HepG2 (cell line): ENCODE measurements at regions of chr15 and their contacts with region 1.

Region 1: GRCh38 chr15:88610701-88611231 is 10.4 kb upstream of the AEN start:
- DNase-seq: no peak
- ATAC-seq: no peak; the same call in 2 of the 3 replicates
- H3K4me3 ChIP-seq: no peak overlapping the region
- H3K27ac ChIP-seq: no peak overlapping the region
- H3K4me1 ChIP-seq: peaks cover 17% of the 10 kb centered on the region
- H3K27me3 ChIP-seq: peaks cover 2 to 16% of the 10 kb centered on the region in 2 experiments; a peak in 3 of 5 replicates
- CTCF ChIP-seq: no peak
- EP300 ChIP-seq: no peak
- POLR2A ChIP-seq: no peak
- RAD21 ChIP-seq: no peak

Region 2: DNA sequence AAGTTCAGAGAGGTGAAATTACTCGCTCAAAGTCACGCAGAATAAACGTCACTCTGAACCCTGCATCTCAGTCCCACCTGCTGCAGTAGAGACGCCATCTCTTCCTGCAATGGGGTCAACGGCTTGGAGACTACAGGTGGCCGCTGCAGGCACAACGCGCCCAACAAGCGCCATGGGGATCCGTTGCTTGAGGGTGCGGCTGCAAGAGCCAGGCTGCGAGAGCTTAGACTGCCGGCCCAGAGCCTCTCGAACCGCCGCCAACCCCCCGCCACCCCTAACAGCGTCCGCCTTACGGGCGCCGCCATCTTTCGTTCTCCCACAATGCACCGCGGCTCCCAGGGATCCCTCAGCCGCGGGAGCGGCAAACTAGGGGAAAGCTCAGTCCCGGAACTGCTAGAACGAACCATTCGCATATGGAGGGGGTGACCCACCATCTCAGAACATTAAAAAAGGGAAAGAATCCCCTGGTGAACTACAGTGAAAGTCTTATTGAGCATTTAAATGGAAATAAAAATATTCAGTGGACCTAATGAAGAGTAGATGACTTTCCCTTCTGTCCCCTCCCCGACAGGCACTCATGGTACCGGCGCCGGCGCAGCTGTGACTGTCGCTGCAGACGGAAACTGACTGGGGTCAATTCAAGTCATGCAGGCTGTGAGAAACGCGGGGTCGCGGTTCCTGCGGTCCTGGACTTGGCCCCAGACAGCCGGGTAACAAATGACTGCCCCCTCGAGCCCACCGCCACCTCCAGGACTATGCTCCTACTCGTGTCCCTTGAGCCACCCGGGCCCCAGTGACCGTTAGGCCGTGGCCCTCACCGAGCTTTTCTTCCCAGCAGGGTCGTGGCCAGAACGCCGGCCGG is 143.5 kb before region 1 on chr15 and contains the starts of genes MRPL46 and MRPS11:
- CTCF ChIA-PET with region 1: no interaction called
- POLR2A ChIA-PET with region 1: interaction called, 16 read pairs
- in situ Hi-C with region 1: loop called (anchors 5 kb)
- intact Hi-C with region 1: loop called (anchors 2 kb)
- DNase-seq: peak; percentile 79
- ATAC-seq: peak; percentile 87
- H3K4me3 ChIP-seq: peak within 1 kb of the TSS; percentile 86 to 98 (median 91)
- H3K27ac ChIP-seq: peak within 1 kb of the TSS; percentile 91
- H3K4me1 ChIP-seq: peaks cover 55% of the 10 kb centered on the region
- H3K27me3 ChIP-seq: peaks cover 0 to 3% of the 10 kb centered on the region in 2 experiments; a peak in 1 of 5 replicates
- CTCF ChIP-seq: no peak; the same call in 1 of the 2 replicates
- EP300 ChIP-seq: no peak; a peak in 1 of 4 replicates
- POLR2A ChIP-seq: peak; percentile 76 to 78
- RAD21 ChIP-seq: no peak; the same call in 1 of the 2 replicates
- total RNA-seq, gene MRPL46: 79.2 and 107 TPM in 2 replicates
- total RNA-seq, gene MRPS11: 72.7 and 94.1 TPM in 2 replicates

Region 3: GRCh38 chr15:88476635-88477060 is 134.1 kb before region 1 on chr15:
- CTCF ChIA-PET with region 1: interaction called, 5 read pairs
- POLR2A ChIA-PET with region 1: no interaction called
- in situ Hi-C with region 1: no loop called
- intact Hi-C with region 1: loop called (anchors 1 kb)
- DNase-seq: peak; percentile 18
- ATAC-seq: peak; percentile 62
- H3K4me3 ChIP-seq: no peak overlapping the region
- H3K27ac ChIP-seq: no peak overlapping the region
- H3K4me1 ChIP-seq: no peaks in the 10 kb centered on the region
- H3K27me3 ChIP-seq: no peaks in the 10 kb centered on the region
- CTCF ChIP-seq: peak; percentile 63
- EP300 ChIP-seq: no peak
- POLR2A ChIP-seq: no peak
- RAD21 ChIP-seq: peak; percentile 46; the same call in 1 of the 2 replicates

Region 4: GRCh38 chr15:88546248-88547129 is 64.3 kb before region 1 on chr15 and contains the start of gene DET1:
- CTCF ChIA-PET with region 1: no interaction called
- POLR2A ChIA-PET with region 1: no interaction called
- in situ Hi-C with region 1: no loop called
- intact Hi-C with region 1: loop called (anchors 2 kb)
- DNase-seq: peak; percentile 92
- ATAC-seq: peak; percentile 100
- H3K4me3 ChIP-seq: peak within 1 kb of the TSS; percentile 69 to 85 (median 76); a peak in 5 of 6 replicates
- H3K27ac ChIP-seq: peak within 1 kb of the TSS; percentile 51
- H3K4me1 ChIP-seq: no peaks in the 10 kb centered on the region
- H3K27me3 ChIP-seq: no peaks in the 10 kb centered on the region
- CTCF ChIP-seq: peak; percentile 93
- EP300 ChIP-seq: no peak; a peak in 1 of 4 replicates
- POLR2A ChIP-seq: peak in 1 of 2 experiments; percentile 24; a peak in 1 of 4 replicates
- RAD21 ChIP-seq: peak; percentile 32; the same call in 1 of the 2 replicates
- total RNA-seq, gene DET1: 2.1 and 2.2 TPM in 2 replicates

Region 5: DNA sequence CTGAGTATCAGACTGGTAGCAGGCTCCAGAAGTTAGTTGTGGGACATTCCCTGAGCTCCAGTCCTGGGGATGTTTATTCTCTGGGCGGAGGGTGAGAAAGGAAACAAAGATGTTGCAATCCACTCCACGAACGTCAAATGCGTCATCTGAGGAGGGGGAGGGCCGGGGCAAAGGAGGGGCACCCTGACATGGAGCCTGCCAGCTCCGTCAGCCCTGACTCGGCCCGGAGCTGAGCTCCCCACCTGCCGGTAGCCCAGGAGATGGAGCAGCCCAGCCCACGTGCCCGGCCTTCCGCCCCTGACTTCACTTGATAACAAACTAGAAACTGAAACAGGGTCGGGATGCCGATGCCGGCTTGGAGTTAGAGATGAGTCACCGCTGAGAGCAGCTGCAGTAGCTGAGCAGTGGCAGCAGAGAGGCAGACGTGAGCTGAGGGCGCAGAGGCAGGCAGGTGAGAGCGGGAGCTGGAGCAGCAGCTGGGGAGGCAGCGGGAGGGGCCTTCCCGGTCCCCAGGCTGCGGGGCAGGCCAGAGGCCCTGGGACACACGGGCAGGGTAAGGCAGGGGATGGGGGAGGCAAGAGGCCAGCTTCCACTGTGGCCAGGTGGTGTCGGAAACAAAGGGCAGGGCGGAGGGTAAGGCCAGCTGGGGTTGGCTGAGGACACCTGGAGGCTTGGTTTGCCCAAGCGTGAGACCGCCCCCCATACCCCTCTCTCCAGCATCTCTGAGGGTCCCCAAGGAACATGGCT is 28.0 kb after region 1 on chr15 and contains the start of gene ISG20:
- CTCF ChIA-PET with region 1: no interaction called
- POLR2A ChIA-PET with region 1: interaction called, 19 read pairs
- in situ Hi-C with region 1: no loop called
- intact Hi-C with region 1: no loop called
- DNase-seq: peak; percentile 95
- ATAC-seq: peak; percentile 88
- H3K4me3 ChIP-seq: peak within 1 kb of the TSS; percentile 51 to 79 (median 66)
- H3K27ac ChIP-seq: peak within 1 kb of the TSS; percentile 95
- H3K4me1 ChIP-seq: peaks cover 45% of the 10 kb centered on the region
- H3K27me3 ChIP-seq: no peaks in the 10 kb centered on the region
- CTCF ChIP-seq: peak; percentile 62
- EP300 ChIP-seq: peak; percentile 40 to 45; a peak in 2 of 4 replicates
- POLR2A ChIP-seq: peak; percentile 58 to 74; a peak in 3 of 4 replicates
- RAD21 ChIP-seq: no peak
- total RNA-seq, gene ISG20: 6.3 and 10.5 TPM in 2 replicates